B cell (primary cell): ENCODE measurements at regions of chr2 and their contacts with region 1.

Region 1: GRCh38 chr2:106104332-106105062 is 89.6 kb downstream of the UXS1 start:
- DNase-seq: peak; percentile 72
- ATAC-seq: peak; percentile 62
- H3K4me3 ChIP-seq: no peak overlapping the region
- H3K4me3 Mint-ChIP-seq: no peak overlapping the region
- H3K27ac ChIP-seq: no peak overlapping the region
- H3K27ac Mint-ChIP-seq: no peak overlapping the region
- H3K4me1 ChIP-seq: no peaks in the 10 kb centered on the region
- H3K4me1 Mint-ChIP-seq: peaks cover 13% of the 10 kb centered on the region
- H3K27me3 ChIP-seq: no peaks in the 10 kb centered on the region
- H3K27me3 Mint-ChIP-seq: no peaks in the 10 kb centered on the region
- CTCF ChIP-seq: peak; percentile 98

Region 2: GRCh38 chr2:105278654-105279053 is 825.8 kb before region 1 on chr2:
- CTCF ChIA-PET with region 1: no interaction called
- POLR2A ChIA-PET with region 1: no interaction called
- intact Hi-C with region 1: no loop called
- DNase-seq: no peak
- ATAC-seq: no peak
- H3K4me3 ChIP-seq: no peak overlapping the region
- H3K4me3 Mint-ChIP-seq: no peak overlapping the region
- H3K27ac ChIP-seq: no peak overlapping the region
- H3K27ac Mint-ChIP-seq: no peak overlapping the region
- H3K4me1 ChIP-seq: no peaks in the 10 kb centered on the region
- H3K4me1 Mint-ChIP-seq: no peaks in the 10 kb centered on the region
- H3K27me3 ChIP-seq: no peaks in the 10 kb centered on the region
- H3K27me3 Mint-ChIP-seq: no peaks in the 10 kb centered on the region
- CTCF ChIP-seq: no peak

Region 3: DNA sequence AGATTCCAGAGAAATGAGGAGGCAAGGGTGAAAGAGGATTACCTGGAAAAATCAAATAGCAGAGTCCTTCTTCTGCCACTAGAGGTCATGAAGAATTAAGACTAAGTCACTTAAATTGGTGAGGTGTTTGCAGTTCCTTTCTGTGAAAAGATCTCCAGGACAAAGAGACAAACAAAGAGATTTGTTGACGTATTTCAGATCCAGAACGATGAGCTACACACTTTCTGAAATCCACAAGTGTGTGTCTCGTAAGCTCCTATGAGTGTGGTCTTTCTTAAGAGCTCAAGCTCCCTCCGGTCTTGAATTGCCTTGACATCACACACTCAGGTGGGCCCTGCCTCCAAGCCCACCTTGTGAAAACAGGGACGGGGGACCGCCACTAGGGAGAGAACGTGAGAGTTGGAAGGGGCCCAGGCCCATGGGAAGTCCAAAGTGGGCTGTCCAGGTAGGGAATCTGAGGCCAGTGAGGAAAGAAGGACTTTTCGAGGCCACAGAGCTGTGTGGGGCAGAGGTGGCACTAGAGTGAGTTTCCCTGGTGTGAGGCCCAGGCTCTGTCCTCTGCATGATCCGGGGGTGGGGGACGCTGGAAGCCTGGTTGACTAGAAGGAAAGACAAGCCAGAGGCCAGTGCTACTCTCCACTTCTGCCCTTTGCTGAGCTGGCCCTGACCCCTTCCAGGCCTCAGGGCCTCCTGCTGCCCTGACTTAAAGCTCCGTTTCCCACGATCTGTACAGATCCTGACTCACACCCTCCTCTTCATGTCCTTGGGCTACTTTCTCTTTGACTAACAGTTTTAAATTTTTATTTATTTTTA is 527.9 kb before region 1 on chr2:
- CTCF ChIA-PET with region 1: interaction called, 15 read pairs
- POLR2A ChIA-PET with region 1: no interaction called
- intact Hi-C with region 1: loop called (anchors 5 kb)
- DNase-seq: peak; percentile 53
- ATAC-seq: no peak
- H3K4me3 ChIP-seq: no peak overlapping the region
- H3K4me3 Mint-ChIP-seq: no peak overlapping the region
- H3K27ac ChIP-seq: no peak overlapping the region
- H3K27ac Mint-ChIP-seq: peak overlapping the region; percentile 42
- H3K4me1 ChIP-seq: peaks cover 0 to 2% of the 10 kb centered on the region in 2 donors
- H3K4me1 Mint-ChIP-seq: peaks cover 5% of the 10 kb centered on the region
- H3K27me3 ChIP-seq: peaks cover 0 to 9% (median 0%) of the 10 kb centered on the region in 4 experiments
- H3K27me3 Mint-ChIP-seq: peaks cover 24% of the 10 kb centered on the region
- CTCF ChIP-seq: peak; percentile 72

Region 4: DNA sequence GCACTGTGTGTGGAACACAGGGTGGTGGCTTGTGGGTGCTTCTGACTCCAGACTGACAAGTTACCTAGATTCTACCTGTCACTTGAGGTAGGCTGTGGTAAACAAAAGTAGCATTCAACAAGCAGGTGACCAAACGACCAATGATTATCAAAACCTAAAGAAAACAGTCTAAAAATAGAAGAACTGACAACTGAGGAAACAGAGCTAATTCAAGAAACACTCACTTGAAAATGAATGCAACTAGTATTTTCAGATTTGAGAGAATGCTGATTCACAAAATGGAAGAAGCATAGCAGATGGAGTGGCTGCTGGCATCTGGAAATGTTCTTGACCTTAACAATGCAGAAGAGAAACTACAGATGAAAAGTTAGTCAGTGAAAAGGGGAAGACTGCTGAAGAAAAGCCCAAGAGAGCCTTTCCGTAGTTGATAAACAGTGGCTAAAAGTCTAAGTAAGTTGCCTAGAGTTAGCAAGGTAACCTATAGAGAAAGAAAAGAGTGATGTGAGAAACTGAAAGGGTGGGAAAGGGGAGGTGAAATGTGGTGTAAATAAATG is 189.4 kb before region 1 on chr2:
- CTCF ChIA-PET with region 1: no interaction called
- POLR2A ChIA-PET with region 1: no interaction called
- intact Hi-C with region 1: no loop called
- DNase-seq: peak; percentile 17
- ATAC-seq: no peak
- H3K4me3 ChIP-seq: no peak overlapping the region
- H3K4me3 Mint-ChIP-seq: peak overlapping the region; percentile 6
- H3K27ac ChIP-seq: no peak overlapping the region
- H3K27ac Mint-ChIP-seq: peak overlapping the region; percentile 50
- H3K4me1 ChIP-seq: peaks cover 0 to 5% of the 10 kb centered on the region in 2 donors
- H3K4me1 Mint-ChIP-seq: peaks cover 9% of the 10 kb centered on the region
- H3K27me3 ChIP-seq: no peaks in the 10 kb centered on the region
- H3K27me3 Mint-ChIP-seq: no peaks in the 10 kb centered on the region
- CTCF ChIP-seq: no peak

Region 5: DNA sequence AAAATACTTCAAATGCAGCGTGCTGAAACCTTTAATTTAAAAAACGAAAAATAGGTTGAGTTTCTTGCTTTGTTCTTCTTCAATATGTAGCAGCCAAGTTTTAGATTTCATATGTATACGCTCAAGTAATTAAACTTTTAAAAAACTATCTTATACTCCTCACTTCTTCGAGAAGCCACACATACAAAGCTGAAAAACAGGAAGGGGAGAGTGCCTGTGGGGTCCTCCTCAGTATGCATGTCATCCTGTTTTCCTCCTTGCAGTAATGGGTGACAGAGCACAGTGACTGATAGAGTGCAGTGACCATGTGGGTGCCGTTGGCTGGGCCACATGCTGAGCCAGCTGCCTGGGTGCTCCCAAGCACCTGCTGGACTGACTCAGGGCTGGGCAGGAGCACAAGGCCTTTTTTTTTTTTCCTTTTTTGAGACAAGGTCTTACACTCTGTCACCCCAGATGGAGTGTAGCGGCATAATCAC is 56.3 kb after region 1 on chr2:
- CTCF ChIA-PET with region 1: interaction called, 18 read pairs
- POLR2A ChIA-PET with region 1: no interaction called
- intact Hi-C with region 1: no loop called
- DNase-seq: peak; percentile 65
- ATAC-seq: peak; percentile 74
- H3K4me3 ChIP-seq: peak overlapping the region; percentile 50 to 66 (median 51)
- H3K4me3 Mint-ChIP-seq: peak overlapping the region; percentile 92
- H3K27ac ChIP-seq: peak overlapping the region; percentile 86 to 92
- H3K27ac Mint-ChIP-seq: peak overlapping the region; percentile 97
- H3K4me1 ChIP-seq: peaks cover 60 to 68% of the 10 kb centered on the region in 2 donors
- H3K4me1 Mint-ChIP-seq: peaks cover 71% of the 10 kb centered on the region
- H3K27me3 ChIP-seq: no peaks in the 10 kb centered on the region
- H3K27me3 Mint-ChIP-seq: no peaks in the 10 kb centered on the region
- CTCF ChIP-seq: no peak

Region 6: DNA sequence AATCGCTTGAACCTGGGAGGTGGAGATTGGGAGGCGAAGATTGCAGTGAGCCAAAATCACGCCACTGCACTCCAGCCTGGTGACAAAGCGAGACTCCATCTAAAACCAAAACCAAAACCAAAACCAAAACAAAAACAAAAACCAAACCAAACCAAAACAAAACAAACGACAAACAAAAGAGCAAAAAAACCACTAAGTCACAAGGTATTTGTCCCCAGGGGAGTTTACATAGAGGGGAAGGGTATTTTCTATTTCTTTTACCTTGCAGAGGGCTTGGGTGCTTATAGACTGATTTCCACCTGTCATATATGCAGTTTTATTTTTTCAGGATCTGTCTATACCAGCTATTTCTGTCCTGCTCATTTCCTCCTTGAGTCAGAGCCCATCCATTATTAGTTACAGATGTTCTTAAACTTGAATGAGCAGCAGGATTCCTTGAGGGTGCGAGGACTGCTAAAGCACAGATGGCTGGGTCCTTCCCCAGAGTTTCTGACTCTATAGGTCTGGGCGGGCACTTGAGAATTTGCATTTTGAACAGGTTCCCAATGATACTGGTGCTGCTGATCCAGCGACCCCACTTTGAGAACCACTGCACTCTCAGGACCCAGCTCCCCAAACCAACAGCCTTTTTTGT is 191.8 kb after region 1 on chr2:
- CTCF ChIA-PET with region 1: no interaction called
- POLR2A ChIA-PET with region 1: no interaction called
- intact Hi-C with region 1: no loop called
- DNase-seq: no peak
- ATAC-seq: no peak
- H3K4me3 ChIP-seq: no peak overlapping the region
- H3K4me3 Mint-ChIP-seq: no peak overlapping the region
- H3K27ac ChIP-seq: no peak overlapping the region
- H3K27ac Mint-ChIP-seq: no peak overlapping the region
- H3K4me1 ChIP-seq: no peaks in the 10 kb centered on the region
- H3K4me1 Mint-ChIP-seq: no peaks in the 10 kb centered on the region
- H3K27me3 ChIP-seq: peaks cover 0 to 3% (median 0%) of the 10 kb centered on the region in 4 experiments
- H3K27me3 Mint-ChIP-seq: peaks cover 10% of the 10 kb centered on the region
- CTCF ChIP-seq: no peak

Region 7: DNA sequence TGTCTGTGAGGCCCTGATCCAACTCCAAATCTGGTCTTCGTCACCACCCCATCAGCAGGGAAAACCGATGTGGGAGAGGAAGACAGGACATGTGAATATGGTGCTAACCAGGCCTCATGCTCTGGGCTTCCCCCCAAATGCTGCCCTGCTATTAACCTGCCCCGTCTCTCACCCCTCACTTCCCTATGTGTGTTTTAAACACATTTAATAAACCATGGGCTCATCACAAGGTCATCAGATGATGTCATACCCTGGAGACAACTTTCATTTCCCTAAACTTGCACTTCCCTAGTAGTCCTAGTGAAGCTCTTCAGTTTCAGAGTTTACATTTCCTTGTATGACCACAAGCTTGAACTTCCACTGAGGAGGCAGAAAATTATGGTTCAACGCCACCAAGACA is 432.6 kb after region 1 on chr2:
- CTCF ChIA-PET with region 1: interaction called, 16 read pairs
- POLR2A ChIA-PET with region 1: no interaction called
- intact Hi-C with region 1: loop called (anchors 1 kb)
- DNase-seq: peak; percentile 68
- ATAC-seq: peak; percentile 45
- H3K4me3 ChIP-seq: no peak overlapping the region
- H3K4me3 Mint-ChIP-seq: no peak overlapping the region
- H3K27ac ChIP-seq: no peak overlapping the region
- H3K27ac Mint-ChIP-seq: no peak overlapping the region
- H3K4me1 ChIP-seq: peaks cover 5 to 11% of the 10 kb centered on the region in 2 donors
- H3K4me1 Mint-ChIP-seq: peaks cover 10% of the 10 kb centered on the region
- H3K27me3 ChIP-seq: peaks cover 0 to 3% (median 0%) of the 10 kb centered on the region in 4 experiments
- H3K27me3 Mint-ChIP-seq: peaks cover 18% of the 10 kb centered on the region
- CTCF ChIP-seq: no peak

Region 8: GRCh38 chr2:106582148-106583143 is 477.9 kb after region 1 on chr2:
- CTCF ChIA-PET with region 1: interaction called, 14 read pairs
- POLR2A ChIA-PET with region 1: no interaction called
- intact Hi-C with region 1: loop called (anchors 1 kb)
- DNase-seq: peak; percentile 64
- ATAC-seq: peak; percentile 80
- H3K4me3 ChIP-seq: peak overlapping the region; percentile 26 to 66 (median 56)
- H3K4me3 Mint-ChIP-seq: peak overlapping the region; percentile 94
- H3K27ac ChIP-seq: no peak overlapping the region
- H3K27ac Mint-ChIP-seq: peak overlapping the region; percentile 62
- H3K4me1 ChIP-seq: peaks cover 9% of the 10 kb centered on the region in 2 donors
- H3K4me1 Mint-ChIP-seq: peaks cover 12% of the 10 kb centered on the region
- H3K27me3 ChIP-seq: peaks cover 0 to 22% (median 4%) of the 10 kb centered on the region in 4 experiments
- H3K27me3 Mint-ChIP-seq: peaks cover 48% of the 10 kb centered on the region
- CTCF ChIP-seq: peak; percentile 97